ENCODE measurements at regions of chr3 and their contacts with region 1.

Region 1: DNA sequence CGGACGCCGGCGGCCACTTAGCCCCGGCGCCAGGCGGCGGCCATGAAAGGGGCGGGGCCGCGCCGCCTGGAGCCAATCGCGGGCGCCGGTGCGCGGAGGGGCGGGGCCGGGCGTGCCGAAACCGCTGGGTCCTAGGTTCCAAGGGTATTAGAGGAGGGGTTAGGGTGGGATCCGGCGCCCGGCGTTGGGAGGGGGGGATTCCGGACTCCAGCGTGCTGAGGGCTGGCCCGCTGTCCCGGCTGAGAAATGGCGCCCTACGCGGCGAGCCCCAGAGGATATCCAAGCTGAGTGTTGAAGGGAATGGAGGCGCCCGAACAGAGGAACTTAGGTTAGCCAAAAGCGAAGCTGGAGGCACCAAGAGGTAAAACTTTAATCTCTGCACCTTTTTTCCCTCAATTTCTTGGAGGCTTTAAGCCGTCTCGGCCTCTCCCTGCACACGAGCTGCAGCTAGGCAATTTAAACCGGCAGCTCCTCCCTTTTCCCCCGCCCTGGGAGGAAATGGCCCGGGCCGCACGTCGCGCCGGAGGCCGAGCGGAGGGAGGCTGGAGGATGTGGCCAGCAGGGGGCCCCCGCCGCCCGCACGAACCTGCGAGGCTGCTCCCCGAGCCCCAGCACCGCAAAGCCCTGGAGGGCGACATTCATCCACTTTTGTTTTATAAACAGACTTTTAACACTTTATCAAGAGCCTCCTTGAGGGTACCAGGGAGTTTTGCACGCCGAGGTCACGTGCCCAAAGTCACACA is at the start of gene XXYLT1:
- DNase-seq: peak; percentile 94
- ATAC-seq: peak; percentile 89
- H3K4me3 Mint-ChIP-seq: peak within 1 kb of the TSS; percentile 82
- H3K27ac Mint-ChIP-seq: peak within 1 kb of the TSS; percentile 85
- H3K4me1 Mint-ChIP-seq: peaks cover 31% of the 10 kb centered on the region
- H3K27me3 Mint-ChIP-seq: no peaks in the 10 kb centered on the region
- total RNA-seq, gene XXYLT1: 7.2 to 9.2 TPM

Region 2: GRCh38 chr3:194671900-194672808 is 599.1 kb before region 1 on chr3 and contains the start of gene LSG1:
- CTCF ChIA-PET with region 1: interaction called, 27 read pairs
- DNase-seq: peak; percentile 93
- ATAC-seq: peak; percentile 93
- H3K4me3 Mint-ChIP-seq: peak within 1 kb of the TSS; percentile 89
- H3K27ac Mint-ChIP-seq: peak within 1 kb of the TSS; percentile 95
- H3K4me1 Mint-ChIP-seq: peaks cover 43% of the 10 kb centered on the region
- H3K27me3 Mint-ChIP-seq: no peaks in the 10 kb centered on the region
- total RNA-seq, gene LSG1: 42.8 to 58.7 TPM

Region 3: DNA sequence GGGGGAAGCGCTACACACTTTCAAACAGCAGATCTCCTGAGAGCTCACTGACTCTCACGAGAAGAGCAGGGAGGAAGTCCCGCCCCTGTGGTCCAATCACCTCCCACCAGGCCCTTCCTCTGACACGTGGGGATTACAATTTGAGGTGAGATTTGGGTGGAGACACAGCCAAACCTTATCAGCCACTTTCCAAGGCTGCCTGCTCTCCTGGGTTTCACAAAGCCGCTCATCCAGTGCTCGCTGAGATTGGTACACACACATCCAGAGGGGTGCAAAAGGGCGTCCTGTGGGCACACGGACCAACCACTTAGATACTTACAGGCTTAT is 23.5 kb before region 1 on chr3:
- CTCF ChIA-PET with region 1: no interaction called
- DNase-seq: peak; percentile 37
- ATAC-seq: no peak
- H3K4me3 Mint-ChIP-seq: no peak overlapping the region
- H3K27ac Mint-ChIP-seq: no peak overlapping the region
- H3K4me1 Mint-ChIP-seq: peaks cover 16% of the 10 kb centered on the region
- H3K27me3 Mint-ChIP-seq: no peaks in the 10 kb centered on the region

Region 4: DNA sequence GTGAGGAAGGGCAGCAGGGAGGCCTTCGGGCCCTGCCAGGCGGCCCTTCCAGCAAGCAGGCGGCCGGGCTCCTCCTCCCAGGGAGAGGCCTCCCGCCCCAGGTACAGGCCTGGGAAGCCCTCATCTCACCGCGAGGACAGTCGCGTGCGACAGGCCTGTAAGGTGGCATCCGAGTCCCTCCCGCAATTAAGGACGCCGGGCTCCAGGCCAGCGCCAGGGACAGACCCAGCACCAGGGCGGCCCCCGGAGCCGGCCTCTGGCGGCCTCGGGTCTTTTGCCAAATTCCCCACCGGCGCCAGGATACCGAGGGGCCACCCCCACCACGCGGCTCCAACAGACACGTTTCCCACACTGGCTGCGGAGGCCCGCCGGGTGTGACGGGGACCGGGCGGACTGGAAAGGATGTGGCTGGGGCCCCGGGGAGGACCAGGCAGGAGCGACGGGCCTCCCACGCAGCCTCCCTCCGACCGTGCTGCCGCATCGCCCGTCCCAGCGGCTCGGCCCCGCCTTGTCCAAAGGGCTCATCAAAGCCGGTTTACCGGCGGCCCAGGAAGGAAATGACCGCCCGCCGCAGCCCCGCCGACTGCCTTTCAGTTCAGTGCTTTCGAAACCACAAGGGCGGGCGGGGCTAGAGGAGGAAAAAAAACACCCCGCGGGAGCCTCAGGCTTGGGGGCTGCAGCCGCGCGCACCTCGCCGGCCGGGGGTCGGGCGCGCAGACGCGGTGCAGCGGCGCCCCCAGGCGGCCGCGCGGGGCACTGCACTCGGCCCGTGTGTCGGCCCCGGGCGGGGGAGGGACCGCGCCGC is 11.6 kb before region 1 on chr3:
- CTCF ChIA-PET with region 1: interaction called, 58 read pairs
- DNase-seq: peak; percentile 93
- ATAC-seq: peak; percentile 83
- H3K4me3 Mint-ChIP-seq: no peak overlapping the region
- H3K27ac Mint-ChIP-seq: peak overlapping the region; percentile 22
- H3K4me1 Mint-ChIP-seq: peaks cover 16% of the 10 kb centered on the region
- H3K27me3 Mint-ChIP-seq: no peaks in the 10 kb centered on the region

Region 5: DNA sequence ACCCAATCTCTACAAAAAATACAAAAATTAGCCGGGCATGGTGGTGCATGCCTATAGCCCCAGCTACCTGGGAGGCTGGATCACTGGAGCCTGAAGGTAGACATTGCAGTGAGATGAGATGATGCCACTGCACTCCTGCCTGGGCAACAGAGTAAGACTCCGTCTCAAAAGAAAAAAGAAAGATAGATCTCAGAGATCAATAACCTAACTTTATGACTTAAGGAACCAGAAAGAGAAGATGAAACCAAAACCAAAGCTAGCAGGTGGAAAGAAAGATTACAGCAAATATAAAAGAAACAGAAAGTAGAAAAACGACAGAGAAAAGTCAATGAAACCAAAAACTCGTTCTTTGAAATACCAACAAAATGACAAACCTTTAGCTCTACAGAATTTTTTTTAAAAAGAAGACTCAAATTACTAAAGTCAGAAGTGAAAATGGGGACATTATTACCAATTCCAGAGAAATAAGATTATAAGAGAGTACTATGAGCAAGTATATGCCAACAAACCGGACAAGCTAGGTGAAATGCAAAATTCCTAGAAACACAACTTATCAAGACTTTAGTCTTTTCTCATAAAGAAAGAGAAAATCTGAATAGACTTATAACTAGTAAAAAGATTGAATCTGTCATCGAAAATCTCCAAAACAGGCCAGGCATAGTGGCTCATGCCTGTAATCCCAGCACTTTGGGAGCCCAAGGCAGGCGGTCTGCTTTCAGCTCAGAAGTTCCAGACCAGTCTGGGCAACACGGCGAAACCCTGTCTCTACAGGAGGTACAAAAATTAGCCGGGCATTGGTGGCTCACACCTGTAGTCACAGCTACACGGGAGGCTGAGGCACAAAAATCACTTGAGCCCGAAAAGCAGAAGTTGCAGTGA is 136.5 kb after region 1 on chr3:
- CTCF ChIA-PET with region 1: interaction called, 10 read pairs
- DNase-seq: no peak
- ATAC-seq: peak; percentile 44
- H3K4me3 Mint-ChIP-seq: peak overlapping the region; percentile 67
- H3K27ac Mint-ChIP-seq: peak overlapping the region; percentile 80
- H3K4me1 Mint-ChIP-seq: peaks cover 39% of the 10 kb centered on the region
- H3K27me3 Mint-ChIP-seq: no peaks in the 10 kb centered on the region

Region 6: DNA sequence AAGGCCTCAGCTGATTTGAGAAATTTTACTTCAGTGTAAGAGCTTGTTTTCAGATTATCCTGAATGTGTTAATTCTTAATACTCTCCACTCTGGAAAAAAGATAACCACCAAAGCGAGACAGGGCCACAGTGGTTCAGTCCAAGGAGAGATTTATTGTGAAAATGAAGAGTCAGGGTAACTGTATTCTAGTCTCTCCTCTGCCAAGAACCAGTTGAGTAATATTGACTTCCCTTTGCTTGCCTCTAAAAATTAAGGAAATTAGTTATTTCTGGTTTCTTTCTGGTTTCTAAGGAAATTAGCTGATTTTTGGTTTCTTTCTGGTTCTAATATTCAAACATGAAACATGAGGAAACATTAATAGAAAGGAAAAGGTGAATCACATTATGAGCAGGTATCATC is 236.9 kb after region 1 on chr3:
- CTCF ChIA-PET with region 1: interaction called, 46 read pairs
- DNase-seq: no peak
- ATAC-seq: no peak
- H3K4me3 Mint-ChIP-seq: no peak overlapping the region
- H3K27ac Mint-ChIP-seq: no peak overlapping the region
- H3K4me1 Mint-ChIP-seq: peaks cover under 1% of the 10 kb centered on the region
- H3K27me3 Mint-ChIP-seq: no peaks in the 10 kb centered on the region

Region 7: DNA sequence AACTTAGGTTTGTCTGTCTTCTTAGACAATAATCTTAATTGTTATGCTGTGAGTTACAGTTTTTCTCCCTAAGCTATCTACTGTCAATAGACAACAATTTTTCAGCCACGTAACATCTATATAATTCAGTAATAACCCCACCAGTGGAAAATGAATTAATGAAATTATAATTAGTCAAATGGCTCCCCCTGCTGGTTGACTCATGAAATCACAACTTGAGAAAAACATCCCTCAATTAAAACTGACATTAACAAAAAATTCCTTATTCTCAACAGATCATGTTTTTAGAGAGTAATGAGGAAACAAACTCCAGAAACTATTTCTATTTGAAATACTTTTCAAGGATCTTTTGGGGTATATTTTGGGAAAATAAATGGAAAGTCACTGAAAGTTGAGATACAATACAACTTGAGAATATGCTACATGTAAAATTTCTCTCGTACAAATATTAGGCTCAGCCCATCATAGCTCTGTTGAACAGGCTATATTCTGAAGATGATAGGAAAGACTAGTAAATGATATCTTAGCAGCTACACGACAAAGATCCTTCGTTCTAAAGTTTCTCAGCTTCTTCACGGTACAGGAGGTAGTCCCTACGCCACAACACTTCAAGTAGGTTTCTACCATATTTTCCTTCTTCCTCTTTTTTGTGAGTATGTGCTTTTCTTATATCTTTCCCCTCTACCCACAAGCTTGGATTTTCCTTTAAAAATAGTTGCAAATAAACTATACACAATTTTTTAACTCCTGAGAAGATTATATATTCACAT is 251.2 kb after region 1 on chr3:
- CTCF ChIA-PET with region 1: interaction called, 228 read pairs
- DNase-seq: no peak
- ATAC-seq: peak; percentile 38
- H3K4me3 Mint-ChIP-seq: no peak overlapping the region
- H3K27ac Mint-ChIP-seq: peak overlapping the region; percentile 42
- H3K4me1 Mint-ChIP-seq: peaks cover 32% of the 10 kb centered on the region
- H3K27me3 Mint-ChIP-seq: no peaks in the 10 kb centered on the region

Region 8: GRCh38 chr3:195549931-195550519 is 278.7 kb after region 1 on chr3:
- CTCF ChIA-PET with region 1: interaction called, 115 read pairs
- DNase-seq: peak; percentile 92
- ATAC-seq: peak; percentile 73
- H3K4me3 Mint-ChIP-seq: peak overlapping the region; percentile 71
- H3K27ac Mint-ChIP-seq: peak overlapping the region; percentile 91
- H3K4me1 Mint-ChIP-seq: peaks cover 71% of the 10 kb centered on the region
- H3K27me3 Mint-ChIP-seq: no peaks in the 10 kb centered on the region

Measured in activated CD8-positive, alpha-beta memory T cell treated with anti-CD3 and anti-CD28 coated beads, Interleukin-2, amount 10 ng/mL, durations not matched to agents 7 days and 5 days (primary cell).